ENCODE measurements at regions of chr2 and their contacts with region 1.

Region 1: GRCh38 chr2:231463698-231464575 is at the start of gene NCL:
- DNase-seq: peak; percentile 90
- H3K4me3 Mint-ChIP-seq: peak within 1 kb of the TSS; percentile 99
- H3K27ac Mint-ChIP-seq: peak within 1 kb of the TSS; percentile 99
- H3K4me1 Mint-ChIP-seq: peaks cover 51% of the 10 kb centered on the region
- H3K27me3 Mint-ChIP-seq: no peaks in the 10 kb centered on the region
- total RNA-seq, gene NCL: 454 to 476 TPM

Region 2: GRCh38 chr2:231056453-231057424 is 407.2 kb before region 1 on chr2 and contains the start of gene PSMD1:
- CTCF ChIA-PET with region 1: interaction called, 7 read pairs
- POLR2A ChIA-PET with region 1: interaction called, 11 read pairs
- DNase-seq: peak; percentile 93
- H3K4me3 Mint-ChIP-seq: peak within 1 kb of the TSS; percentile 96
- H3K27ac Mint-ChIP-seq: peak within 1 kb of the TSS; percentile 98
- H3K4me1 Mint-ChIP-seq: peaks cover 64% of the 10 kb centered on the region
- H3K27me3 Mint-ChIP-seq: peaks cover 4% of the 10 kb centered on the region
- total RNA-seq, gene PSMD1: 79.3 to 80.0 TPM

Region 3: GRCh38 chr2:231452799-231453508 is 11.0 kb before region 1 on chr2:
- CTCF ChIA-PET with region 1: interaction called, 46 read pairs
- POLR2A ChIA-PET with region 1: interaction called, 153 read pairs
- DNase-seq: no peak
- H3K4me3 Mint-ChIP-seq: no peak overlapping the region
- H3K27ac Mint-ChIP-seq: no peak overlapping the region
- H3K4me1 Mint-ChIP-seq: peaks cover 19% of the 10 kb centered on the region
- H3K27me3 Mint-ChIP-seq: no peaks in the 10 kb centered on the region

Region 4: GRCh38 chr2:231514103-231514950 is 50.4 kb after region 1 on chr2:
- CTCF ChIA-PET with region 1: interaction called, 9 read pairs
- POLR2A ChIA-PET with region 1: interaction called, 25 read pairs
- DNase-seq: peak; percentile 99
- H3K4me3 Mint-ChIP-seq: peak overlapping the region; percentile 88
- H3K27ac Mint-ChIP-seq: peak overlapping the region; percentile 86
- H3K4me1 Mint-ChIP-seq: peaks cover 29% of the 10 kb centered on the region
- H3K27me3 Mint-ChIP-seq: peaks cover 14% of the 10 kb centered on the region

Region 5: GRCh38 chr2:231557571-231558237 is 93.8 kb after region 1 on chr2:
- CTCF ChIA-PET with region 1: no interaction called
- POLR2A ChIA-PET with region 1: interaction called, 13 read pairs
- DNase-seq: peak; percentile 74
- H3K4me3 Mint-ChIP-seq: no peak overlapping the region
- H3K27ac Mint-ChIP-seq: no peak overlapping the region
- H3K4me1 Mint-ChIP-seq: peaks cover 33% of the 10 kb centered on the region
- H3K27me3 Mint-ChIP-seq: peaks cover 8% of the 10 kb centered on the region

Region 6: GRCh38 chr2:231706731-231707624 is 243.0 kb after region 1 on chr2:
- CTCF ChIA-PET with region 1: interaction called, 3 read pairs
- POLR2A ChIA-PET with region 1: interaction called, 55 read pairs
- DNase-seq: peak; percentile 97
- H3K4me3 Mint-ChIP-seq: peak overlapping the region; percentile 91
- H3K27ac Mint-ChIP-seq: peak overlapping the region; percentile 100
- H3K4me1 Mint-ChIP-seq: peaks cover 20% of the 10 kb centered on the region
- H3K27me3 Mint-ChIP-seq: no peaks in the 10 kb centered on the region